Heart left ventricle (tissue), 16 donors: ENCODE measurements at regions of chr22 and their contacts with region 1.

Region 1: DNA sequence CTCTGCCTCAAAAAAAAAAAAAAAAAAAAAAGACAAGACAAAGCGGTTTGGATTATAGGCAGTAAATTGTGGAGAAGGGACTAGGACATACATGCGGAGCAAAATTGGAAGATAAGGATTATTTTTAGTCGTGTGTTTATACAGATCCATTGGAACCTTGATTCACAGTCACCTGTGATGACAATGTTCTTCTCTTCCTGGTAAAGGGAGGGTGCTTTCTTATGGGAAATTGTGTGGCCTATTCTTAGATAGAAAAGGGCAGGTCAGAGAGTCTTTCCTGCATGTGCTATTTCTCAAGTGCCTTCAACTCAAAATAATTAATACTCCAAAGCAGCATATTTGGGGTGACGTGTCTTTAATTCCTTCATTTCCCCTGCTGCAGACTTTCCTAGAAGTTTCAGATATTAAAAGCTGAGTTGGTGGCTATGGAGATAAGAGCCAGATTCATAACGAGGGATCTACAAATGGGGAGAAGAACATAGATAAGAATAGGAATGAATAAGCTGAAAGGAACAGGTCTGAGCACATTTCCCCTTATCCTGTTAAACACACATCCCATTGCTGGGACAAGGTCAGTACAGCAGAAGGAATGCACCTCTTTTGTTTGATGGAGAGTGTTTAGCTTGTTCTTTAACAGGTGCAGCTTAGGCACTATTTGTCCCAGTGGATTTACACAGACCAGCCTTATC is 22.5 kb downstream of the GSTT2B start:
- DNase-seq: no peak
- ATAC-seq: peak in 1 of 4 donors; percentile 75
- H3K4me3 ChIP-seq: no peak overlapping the region
- H3K27ac ChIP-seq: peak overlapping the region in 1 of 12 donors; percentile 26
- H3K4me1 ChIP-seq: peaks cover 0 to 6% (median 0%) of the 10 kb centered on the region in 12 donors
- H3K27me3 ChIP-seq: no peaks in the 10 kb centered on the region
- CTCF ChIP-seq: no peak
- POLR2A ChIP-seq: no peak

Region 2: GRCh38 chr22:23862103-23862502 is 76.4 kb before region 1 on chr22:
- intact Hi-C with region 1: loop called in 1 of 10 experiments (anchors 10 kb)
- DNase-seq: no peak
- ATAC-seq: no peak
- H3K4me3 ChIP-seq: no peak overlapping the region
- H3K27ac ChIP-seq: no peak overlapping the region
- H3K4me1 ChIP-seq: peaks cover 0 to 24% (median 12%) of the 10 kb centered on the region in 12 donors
- H3K27me3 ChIP-seq: no peaks in the 10 kb centered on the region
- CTCF ChIP-seq: peak in 10 of 12 donors; percentile 13 to 56 (median 48)
- POLR2A ChIP-seq: no peak

Region 3: GRCh38 chr22:23913661-23914353 is 24.7 kb before region 1 on chr22:
- intact Hi-C with region 1: no loop called
- DNase-seq: peak; percentile 99 to 100 (median 100)
- ATAC-seq: peak; percentile 98 to 100 (median 100)
- H3K4me3 ChIP-seq: peak overlapping the region; percentile 24 to 73 (median 64)
- H3K27ac ChIP-seq: peak overlapping the region; percentile 42 to 94 (median 87)
- H3K4me1 ChIP-seq: peaks cover 0 to 21% (median 18%) of the 10 kb centered on the region in 12 donors
- H3K27me3 ChIP-seq: no peaks in the 10 kb centered on the region
- CTCF ChIP-seq: no peak
- POLR2A ChIP-seq: peak in 1 of 2 donors; percentile 91

Region 4: DNA sequence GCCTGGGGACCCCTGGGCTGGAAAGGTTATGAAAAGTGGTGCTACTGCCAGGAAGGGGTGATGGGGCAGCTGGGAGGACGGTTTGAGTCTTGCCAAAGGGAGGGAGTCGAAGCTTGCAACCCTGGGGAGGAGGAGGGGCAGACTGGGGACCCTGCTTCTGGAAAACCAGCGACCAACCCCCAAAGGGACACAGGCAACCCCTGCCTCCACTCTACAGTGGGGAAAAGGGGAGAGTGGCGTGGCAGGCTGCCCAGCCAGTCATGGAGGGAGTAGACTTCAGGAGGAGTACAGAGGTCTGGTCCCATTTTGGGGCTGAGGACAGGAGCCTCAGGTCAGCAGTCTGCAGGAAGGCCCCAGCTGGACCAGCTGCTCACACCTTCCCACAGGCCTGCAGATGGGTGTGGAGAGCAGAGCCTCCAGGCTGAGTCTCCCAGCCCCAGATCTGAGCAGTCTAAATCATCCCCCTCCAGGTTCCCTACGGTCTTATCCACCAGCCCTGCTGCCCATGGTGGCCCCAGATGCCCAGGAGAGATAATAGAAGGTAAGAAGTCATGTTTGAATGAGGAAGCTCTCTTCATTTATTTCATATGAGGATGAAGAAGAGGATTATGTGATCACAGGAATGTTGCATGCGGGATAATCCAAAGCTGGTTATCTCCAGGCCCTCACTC is 32.5 kb after region 1 on chr22:
- intact Hi-C with region 1: loop called in 4 of 10 experiments (anchors 5 kb)
- DNase-seq: peak in 1 of 5 donors; percentile 24
- ATAC-seq: no peak
- H3K4me3 ChIP-seq: no peak overlapping the region
- H3K27ac ChIP-seq: no peak overlapping the region
- H3K4me1 ChIP-seq: peaks cover 0 to 22% (median 1%) of the 10 kb centered on the region in 12 donors
- H3K27me3 ChIP-seq: no peaks in the 10 kb centered on the region
- CTCF ChIP-seq: no peak
- POLR2A ChIP-seq: no peak